Right ventricle myocardium inferior (tissue), 1 donor: ENCODE measurements at regions of chr13 and their contacts with region 1.

Region 1: GRCh38 chr13:44435142-44435982 is 61.7 kb downstream of the SERP2 start:
- DNase-seq: peak; percentile 93
- ATAC-seq: peak; percentile 75

Region 2: DNA sequence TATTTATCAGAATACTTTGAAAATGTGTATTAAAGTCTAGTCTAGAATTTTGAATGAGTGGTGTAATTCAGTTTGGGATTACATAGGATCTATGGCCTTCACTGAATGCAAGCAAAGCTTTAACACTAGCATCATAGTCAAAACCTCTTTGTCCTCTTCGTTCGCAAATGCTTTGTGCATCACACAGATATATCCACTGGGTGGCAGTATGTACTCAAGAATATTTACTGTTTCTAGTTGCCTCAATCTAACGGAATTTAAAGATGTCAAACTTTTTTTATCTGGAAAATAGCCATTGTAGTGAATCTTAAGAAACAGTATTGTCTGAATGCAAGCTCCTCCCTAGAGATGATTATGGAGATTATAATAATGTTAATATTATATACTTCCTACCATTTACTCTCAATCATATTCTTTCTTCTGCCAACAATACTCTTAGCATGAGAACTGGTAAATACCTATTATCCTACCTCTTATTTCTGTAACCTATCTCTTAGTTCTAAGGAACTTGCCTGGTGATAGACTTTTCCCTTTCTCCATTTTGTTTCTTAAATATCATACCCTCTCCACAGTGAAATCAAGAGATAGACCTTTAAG is 529.8 kb before region 1 on chr13:
- intact Hi-C with region 1: loop called (anchors 1 kb)
- DNase-seq: no peak
- ATAC-seq: peak; percentile 65

Region 3: DNA sequence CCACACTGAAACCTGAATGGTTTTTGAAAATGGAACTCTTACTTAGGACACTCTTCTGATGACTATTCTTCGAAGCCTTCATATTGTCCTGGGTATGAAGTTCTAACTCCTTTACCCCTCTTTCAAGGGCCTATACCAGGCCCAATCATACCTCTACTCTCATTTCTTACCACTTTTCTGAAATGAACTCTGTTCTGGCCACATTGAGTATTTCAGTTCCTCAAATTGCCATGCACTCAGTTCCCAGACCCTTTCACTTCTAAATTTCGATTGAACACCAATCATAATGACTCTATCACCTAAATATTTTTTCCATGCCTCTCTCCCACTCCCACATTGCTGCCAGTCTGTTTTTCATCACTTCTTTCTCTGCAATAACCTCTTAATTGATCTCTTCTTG is 502.0 kb before region 1 on chr13:
- intact Hi-C with region 1: no loop called
- DNase-seq: no peak
- ATAC-seq: no peak

Region 4: GRCh38 chr13:44050450-44051063 is 384.8 kb before region 1 on chr13:
- intact Hi-C with region 1: loop called (anchors 1 kb)
- DNase-seq: no peak
- ATAC-seq: no peak

Region 5: GRCh38 chr13:44141725-44142539 is 293.4 kb before region 1 on chr13:
- intact Hi-C with region 1: loop called (anchors 5 kb)
- DNase-seq: peak; percentile 99
- ATAC-seq: peak; percentile 100

Region 6: DNA sequence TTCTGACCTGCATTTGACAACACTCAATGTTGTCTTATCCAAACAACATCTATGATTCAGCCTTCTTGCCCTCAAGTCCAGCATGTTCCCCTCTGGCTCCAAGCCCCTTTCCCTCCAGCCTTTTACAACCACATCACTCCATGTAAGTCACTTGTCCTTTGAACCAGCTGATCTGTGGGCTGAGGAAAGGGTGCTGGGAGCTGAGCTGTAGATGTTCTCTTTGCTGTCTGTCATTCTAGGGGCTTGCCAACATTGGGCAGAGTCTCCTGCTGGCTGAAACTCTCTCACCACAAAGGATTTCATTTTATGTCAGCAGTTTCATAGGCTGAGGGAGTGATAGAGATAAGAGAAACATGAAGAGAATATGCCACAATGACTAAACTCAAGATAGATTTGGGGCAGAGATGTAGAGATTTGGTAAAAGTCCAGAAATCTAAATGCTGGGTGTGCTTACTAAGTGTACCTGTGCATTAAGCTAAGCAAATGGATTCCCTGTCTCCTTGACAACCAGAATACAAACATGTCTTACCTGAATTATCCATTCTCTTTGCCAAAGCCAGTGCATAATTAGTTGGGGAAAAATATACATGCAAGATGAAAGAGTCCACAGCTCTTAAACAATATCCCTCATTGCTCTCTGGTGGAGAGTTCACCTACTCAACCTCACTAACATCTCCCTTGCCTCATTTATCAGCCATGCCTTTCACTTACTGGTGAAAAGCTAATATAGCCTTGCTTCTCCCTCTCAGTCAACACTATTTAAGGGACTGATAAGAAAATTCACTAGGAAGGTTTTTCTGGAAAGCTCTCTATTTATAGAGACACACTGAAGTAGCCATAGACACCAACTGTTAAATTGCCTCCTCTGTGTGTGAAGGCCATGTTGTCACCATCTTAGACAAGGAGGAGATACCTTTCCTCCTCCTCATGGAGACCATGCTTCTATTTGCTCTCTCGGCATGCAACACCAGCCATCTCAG is 237.3 kb before region 1 on chr13:
- intact Hi-C with region 1: loop called (anchors 2 kb)
- DNase-seq: no peak
- ATAC-seq: peak; percentile 37

Region 7: DNA sequence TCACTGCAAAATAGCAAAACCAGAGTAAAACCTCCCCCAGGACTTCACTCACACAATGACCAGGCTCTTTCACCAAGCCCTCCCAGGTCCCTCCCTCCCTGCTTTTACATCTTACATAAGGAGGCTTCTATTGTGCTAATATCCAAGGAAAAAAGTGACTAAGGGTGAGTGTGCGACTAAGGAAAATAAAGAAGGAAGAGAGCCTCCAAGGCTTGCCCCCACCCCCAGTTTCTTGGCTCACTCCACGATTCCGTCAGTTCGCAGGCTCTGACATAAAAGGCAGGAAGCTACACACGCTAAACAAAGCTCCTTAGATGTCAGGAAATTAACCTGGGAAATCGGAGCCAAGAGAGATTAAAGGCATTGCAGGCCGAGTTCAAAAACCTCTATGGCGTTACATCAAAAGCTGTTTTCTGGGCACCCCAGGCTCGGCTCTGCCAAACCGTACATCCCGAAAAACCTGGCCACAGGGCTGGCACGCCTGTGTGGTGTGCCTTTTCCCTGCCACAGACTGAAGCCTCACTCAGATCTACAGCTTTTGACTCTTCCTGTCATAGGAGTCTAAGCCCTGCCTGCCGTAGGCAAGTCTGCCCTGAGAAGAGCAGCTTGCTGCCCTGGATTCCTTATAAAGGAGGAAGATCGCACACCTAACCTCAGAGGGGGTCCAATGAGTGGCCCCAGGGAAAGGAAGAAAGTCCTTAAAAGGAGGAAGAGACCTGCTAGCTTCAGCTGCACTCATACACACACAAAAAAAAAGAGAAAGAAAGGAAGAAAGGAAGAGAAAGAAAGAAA is 128.8 kb before region 1 on chr13:
- intact Hi-C with region 1: loop called (anchors 2 kb)
- DNase-seq: no peak
- ATAC-seq: no peak

Region 8: GRCh38 chr13:44350775-44351509 is 84.4 kb before region 1 on chr13:
- intact Hi-C with region 1: no loop called
- DNase-seq: no peak
- ATAC-seq: no peak

Region 9: DNA sequence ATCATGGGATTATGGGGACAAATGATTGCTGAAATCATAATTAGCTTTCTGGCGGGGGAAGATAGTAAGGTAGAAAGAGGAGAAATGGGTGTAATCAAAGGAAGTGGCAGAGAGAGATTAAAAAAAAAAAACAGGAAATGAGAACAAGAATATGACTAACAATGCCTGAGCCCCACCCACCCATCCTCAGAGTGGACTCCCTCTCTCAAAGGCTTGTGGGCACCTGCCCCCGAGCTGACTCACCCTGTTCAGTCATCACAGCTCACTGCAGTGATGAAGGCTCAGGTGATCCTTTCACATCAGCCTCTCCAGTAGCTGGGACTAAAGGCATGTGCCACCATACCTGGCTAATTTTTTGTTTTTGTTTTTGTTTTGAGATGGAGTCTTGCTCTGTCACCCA is 932.0 kb after region 1 on chr13:
- intact Hi-C with region 1: no loop called
- DNase-seq: no peak
- ATAC-seq: no peak